ENCODE measurements at regions of chr7 and their contacts with region 1.

Region 1: GRCh38 chr7:131654668-131655326 is 98.4 kb upstream of the PODXL start:
- DNase-seq: peak; percentile 92
- H3K4me3 ChIP-seq: 0 out of 4 replicates have a peak overlapping the region, but pooled peaks of 1 of the 2 experiments have one; percentile 10
- H3K27ac ChIP-seq: peak overlapping the region in 1 of 2 experiments; percentile 9; a peak in 1 of 4 replicates
- H3K4me1 ChIP-seq: no peaks in the 10 kb centered on the region; a peak in 1 of 4 replicates
- H3K27me3 ChIP-seq: no peaks in the 10 kb centered on the region
- CTCF ChIP-seq: peak; percentile 98
- EP300 ChIP-seq: no peak
- RAD21 ChIP-seq: peak; percentile 98

Region 2: GRCh38 chr7:131533151-131533559 is 121.6 kb before region 1 on chr7:
- CTCF ChIA-PET with region 1: interaction called, 42 read pairs
- POLR2A ChIA-PET with region 1: no interaction called
- DNase-seq: no peak
- H3K4me3 ChIP-seq: no peak overlapping the region
- H3K27ac ChIP-seq: no peak overlapping the region
- H3K4me1 ChIP-seq: peaks cover 7 to 23% of the 10 kb centered on the region in 2 experiments; a peak in 3 of 4 replicates
- H3K27me3 ChIP-seq: no peaks in the 10 kb centered on the region
- CTCF ChIP-seq: no peak
- EP300 ChIP-seq: no peak
- RAD21 ChIP-seq: no peak

Region 3: GRCh38 chr7:131556052-131556908 is 98.5 kb before region 1 on chr7 and contains the start of gene PODXL:
- CTCF ChIA-PET with region 1: interaction called, 33 read pairs
- POLR2A ChIA-PET with region 1: no interaction called
- DNase-seq: peak; percentile 99
- H3K4me3 ChIP-seq: peak within 1 kb of the TSS; percentile 72 to 76
- H3K27ac ChIP-seq: peak within 1 kb of the TSS; percentile 44 to 62
- H3K4me1 ChIP-seq: peaks cover 10 to 34% of the 10 kb centered on the region in 2 experiments
- H3K27me3 ChIP-seq: no peaks in the 10 kb centered on the region
- CTCF ChIP-seq: no peak
- EP300 ChIP-seq: no peak
- RAD21 ChIP-seq: peak; percentile 25; the same call in 1 of the 2 replicates
- polyA plus RNA-seq, gene PODXL: 76.1 and 86.0 TPM in 2 replicates

Region 4: GRCh38 chr7:131619336-131620305 is 35.2 kb before region 1 on chr7:
- CTCF ChIA-PET with region 1: interaction called, 21 read pairs
- POLR2A ChIA-PET with region 1: no interaction called
- DNase-seq: no peak
- H3K4me3 ChIP-seq: no peak overlapping the region
- H3K27ac ChIP-seq: peak overlapping the region in 1 of 2 experiments; percentile 57; a peak in 2 of 4 replicates
- H3K4me1 ChIP-seq: peaks cover 14 to 24% of the 10 kb centered on the region in 2 experiments; a peak in 3 of 4 replicates
- H3K27me3 ChIP-seq: no peaks in the 10 kb centered on the region
- CTCF ChIP-seq: no peak
- EP300 ChIP-seq: no peak
- RAD21 ChIP-seq: no peak

Region 5: DNA sequence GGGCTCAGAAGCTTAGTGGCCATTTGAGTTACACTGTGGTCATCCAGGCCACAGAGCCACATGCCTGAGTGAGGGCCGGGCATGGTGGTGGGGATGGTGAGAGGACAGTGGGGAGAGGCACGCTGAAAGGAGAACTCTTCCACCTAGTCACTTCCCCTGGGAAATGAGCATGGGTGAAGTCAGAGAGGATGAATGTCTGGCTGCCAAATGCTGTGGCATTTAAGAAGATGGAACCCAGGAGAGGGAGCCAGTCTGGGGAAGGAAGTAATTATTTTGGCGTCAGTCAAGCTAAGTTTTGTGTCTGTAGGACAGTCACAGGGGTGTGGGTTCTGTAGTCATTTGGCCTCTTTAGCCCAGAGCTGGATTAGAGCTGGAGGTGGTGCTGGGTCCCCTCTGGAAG is 12.4 kb before region 1 on chr7:
- CTCF ChIA-PET with region 1: interaction called, 38 read pairs
- POLR2A ChIA-PET with region 1: interaction called, 4 read pairs
- DNase-seq: no peak
- H3K4me3 ChIP-seq: no peak overlapping the region
- H3K27ac ChIP-seq: peak overlapping the region in 1 of 2 experiments; percentile 33; a peak in 2 of 4 replicates
- H3K4me1 ChIP-seq: peaks cover 0 to 14% of the 10 kb centered on the region in 2 experiments; a peak in 1 of 4 replicates
- H3K27me3 ChIP-seq: no peaks in the 10 kb centered on the region
- CTCF ChIP-seq: no peak
- EP300 ChIP-seq: peak in 1 of 2 experiments; percentile 5; a peak in 1 of 4 replicates
- RAD21 ChIP-seq: no peak

Region 6: DNA sequence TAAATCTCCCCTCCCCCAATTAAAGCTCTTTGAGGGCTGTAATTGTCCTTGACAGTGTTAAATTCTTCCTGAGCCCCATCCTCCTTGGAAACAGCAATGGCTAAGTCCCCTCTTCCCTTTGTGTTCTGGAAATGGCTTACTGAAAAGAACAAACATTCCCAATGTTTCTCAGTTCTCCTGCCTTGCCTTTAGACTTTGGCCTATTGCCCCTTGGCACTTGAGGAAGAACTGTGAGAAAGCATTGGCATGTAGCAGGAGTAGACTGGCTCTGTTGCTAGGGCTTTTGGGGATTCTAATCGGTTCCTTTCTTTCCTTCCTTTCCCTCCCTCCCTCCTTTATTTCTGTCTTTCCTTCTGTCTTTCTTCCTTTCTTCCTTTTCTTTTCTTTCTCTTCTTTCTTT is 364.9 kb after region 1 on chr7:
- CTCF ChIA-PET with region 1: no interaction called
- POLR2A ChIA-PET with region 1: no interaction called
- DNase-seq: no peak
- H3K4me3 ChIP-seq: no peak overlapping the region
- H3K27ac ChIP-seq: no peak overlapping the region
- H3K4me1 ChIP-seq: no peaks in the 10 kb centered on the region
- H3K27me3 ChIP-seq: no peaks in the 10 kb centered on the region
- CTCF ChIP-seq: no peak
- EP300 ChIP-seq: no peak
- RAD21 ChIP-seq: no peak